Activated CD4-positive, alpha-beta T cell treated with anti-CD3 and anti-CD28 coated beads, Interleukin-2, amount 10 ng/mL, durations not matched to agents 24 days and 14 days (primary cell): ENCODE measurements at regions of chrX and their contacts with region 1.

Region 1: DNA sequence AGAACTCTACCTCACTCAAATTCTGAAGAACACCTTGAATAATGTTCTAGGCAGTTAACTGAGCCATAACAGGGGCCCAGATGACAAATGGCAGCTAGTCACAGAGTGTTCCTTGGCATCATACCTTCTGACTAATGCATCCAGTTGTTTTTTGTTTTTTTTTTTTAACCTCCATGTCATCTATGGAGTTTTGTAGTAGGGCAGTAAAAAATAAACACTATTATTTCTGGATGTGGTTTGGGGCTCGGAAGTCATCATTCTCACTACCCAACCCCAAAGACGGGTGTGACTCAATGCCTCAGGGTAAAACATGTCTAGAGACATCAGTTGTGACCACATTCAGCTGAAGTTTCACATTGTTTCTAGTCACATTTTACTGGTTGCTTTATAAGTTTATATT is 31.2 kb upstream of the MCF2 start:
- DNase-seq: peak; percentile 71
- H3K4me3 Mint-ChIP-seq: peak overlapping the region; percentile 29
- H3K27ac Mint-ChIP-seq: peak overlapping the region; percentile 65
- H3K4me1 Mint-ChIP-seq: peaks cover 16% of the 10 kb centered on the region
- H3K27me3 Mint-ChIP-seq: no peaks in the 10 kb centered on the region

Region 2: DNA sequence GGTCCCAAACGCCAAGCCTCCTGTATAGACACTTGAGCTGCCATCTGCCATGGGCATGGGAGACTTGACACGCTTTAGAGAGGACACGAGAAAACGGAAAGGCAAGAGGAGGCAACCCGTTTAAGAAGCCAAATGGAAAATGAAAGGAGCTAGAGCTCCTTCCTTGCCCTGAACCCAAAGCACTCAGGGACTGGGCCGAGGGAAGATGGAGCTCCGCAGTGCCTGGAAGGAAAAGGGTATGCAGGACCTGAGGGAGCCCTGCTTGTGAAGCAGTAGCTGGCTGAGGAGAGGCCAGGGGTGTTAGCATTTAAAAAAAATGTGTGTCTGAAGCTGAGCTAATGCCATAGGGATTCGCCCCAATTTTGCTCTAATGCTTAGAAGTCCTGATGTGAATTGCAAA is 46.2 kb before region 1 on chrX:
- intact Hi-C with region 1: no loop called
- DNase-seq: no peak
- H3K4me3 Mint-ChIP-seq: no peak overlapping the region
- H3K27ac Mint-ChIP-seq: no peak overlapping the region
- H3K4me1 Mint-ChIP-seq: no peaks in the 10 kb centered on the region
- H3K27me3 Mint-ChIP-seq: peaks cover 31% of the 10 kb centered on the region

Region 3: DNA sequence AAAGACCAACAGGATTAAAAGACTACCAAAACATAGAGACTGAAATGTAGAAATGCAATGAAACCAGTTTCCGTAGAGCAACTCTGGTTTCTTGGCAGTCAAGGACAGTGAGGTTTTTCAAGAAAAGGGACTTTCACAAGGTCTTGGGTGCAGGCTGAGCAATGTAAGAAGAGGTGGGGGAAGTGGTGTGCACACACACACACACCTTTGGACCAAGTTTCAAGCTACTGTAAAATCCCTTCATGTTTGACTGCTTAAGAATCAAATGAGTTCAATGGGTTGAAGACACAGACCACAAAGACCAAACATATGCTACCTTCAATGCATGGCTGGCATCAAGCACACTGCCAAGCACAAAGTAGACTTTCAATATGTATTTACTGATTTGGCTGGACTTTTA is 13.4 kb before region 1 on chrX:
- intact Hi-C with region 1: loop called (anchors 2 kb)
- DNase-seq: peak; percentile 56
- H3K4me3 Mint-ChIP-seq: no peak overlapping the region
- H3K27ac Mint-ChIP-seq: no peak overlapping the region
- H3K4me1 Mint-ChIP-seq: peaks cover 4% of the 10 kb centered on the region
- H3K27me3 Mint-ChIP-seq: no peaks in the 10 kb centered on the region

Region 4: DNA sequence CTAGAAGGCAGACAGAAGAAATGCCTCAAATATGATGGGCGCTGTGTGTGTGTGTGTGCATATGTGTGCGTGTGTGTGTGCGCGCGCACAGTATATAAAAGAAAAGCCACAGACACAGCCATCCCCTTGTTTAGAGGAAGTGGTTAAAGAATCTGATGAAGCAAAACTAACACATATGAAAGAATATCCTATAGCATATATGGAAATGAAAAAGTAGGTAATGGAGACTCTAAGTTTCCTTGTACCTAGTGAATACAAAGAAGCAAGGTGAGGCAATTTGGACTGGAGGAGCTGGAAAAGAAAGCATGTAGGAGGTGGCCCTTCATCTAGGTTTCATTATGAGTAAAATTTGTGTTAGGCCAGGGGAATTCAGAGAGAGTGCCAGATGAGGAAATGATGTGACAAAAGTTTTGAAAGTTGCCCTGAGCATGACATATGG is 27.4 kb after region 1 on chrX:
- intact Hi-C with region 1: loop called (anchors 1 kb)
- DNase-seq: peak; percentile 83
- H3K4me3 Mint-ChIP-seq: no peak overlapping the region
- H3K27ac Mint-ChIP-seq: no peak overlapping the region
- H3K4me1 Mint-ChIP-seq: peaks cover 2% of the 10 kb centered on the region
- H3K27me3 Mint-ChIP-seq: no peaks in the 10 kb centered on the region

Region 5: GRCh38 chrX:139795196-139795595 is 56.1 kb after region 1 on chrX:
- intact Hi-C with region 1: loop called (anchors 10 kb)
- DNase-seq: peak; percentile 53
- H3K4me3 Mint-ChIP-seq: no peak overlapping the region
- H3K27ac Mint-ChIP-seq: peak overlapping the region; percentile 73
- H3K4me1 Mint-ChIP-seq: peaks cover 5% of the 10 kb centered on the region
- H3K27me3 Mint-ChIP-seq: no peaks in the 10 kb centered on the region